AG04449 (cell line): ENCODE measurements at regions of chr19 and their contacts with region 1.

Region 1: GRCh38 chr19:4791170-4792018 is at the start of gene FEM1A:
- DNase-seq: peak; percentile 100
- H3K4me3 ChIP-seq: peak within 1 kb of the TSS; percentile 76
- CTCF ChIP-seq: peak; percentile 97

Region 2: GRCh38 chr19:4723367-4724187 is 67.8 kb before region 1 on chr19 and contains the start of gene DPP9:
- CTCF ChIA-PET with region 1: interaction called, 315 read pairs
- POLR2A ChIA-PET with region 1: interaction called, 7 read pairs
- DNase-seq: peak; percentile 89
- H3K4me3 ChIP-seq: peak within 1 kb of the TSS; percentile 93
- CTCF ChIP-seq: peak; percentile 21

Region 3: GRCh38 chr19:4738734-4739133 is 52.7 kb before region 1 on chr19:
- CTCF ChIA-PET with region 1: interaction called, 315 read pairs
- POLR2A ChIA-PET with region 1: interaction called, 5 read pairs
- DNase-seq: no peak
- H3K4me3 ChIP-seq: no peak overlapping the region
- CTCF ChIP-seq: no peak

Region 4: DNA sequence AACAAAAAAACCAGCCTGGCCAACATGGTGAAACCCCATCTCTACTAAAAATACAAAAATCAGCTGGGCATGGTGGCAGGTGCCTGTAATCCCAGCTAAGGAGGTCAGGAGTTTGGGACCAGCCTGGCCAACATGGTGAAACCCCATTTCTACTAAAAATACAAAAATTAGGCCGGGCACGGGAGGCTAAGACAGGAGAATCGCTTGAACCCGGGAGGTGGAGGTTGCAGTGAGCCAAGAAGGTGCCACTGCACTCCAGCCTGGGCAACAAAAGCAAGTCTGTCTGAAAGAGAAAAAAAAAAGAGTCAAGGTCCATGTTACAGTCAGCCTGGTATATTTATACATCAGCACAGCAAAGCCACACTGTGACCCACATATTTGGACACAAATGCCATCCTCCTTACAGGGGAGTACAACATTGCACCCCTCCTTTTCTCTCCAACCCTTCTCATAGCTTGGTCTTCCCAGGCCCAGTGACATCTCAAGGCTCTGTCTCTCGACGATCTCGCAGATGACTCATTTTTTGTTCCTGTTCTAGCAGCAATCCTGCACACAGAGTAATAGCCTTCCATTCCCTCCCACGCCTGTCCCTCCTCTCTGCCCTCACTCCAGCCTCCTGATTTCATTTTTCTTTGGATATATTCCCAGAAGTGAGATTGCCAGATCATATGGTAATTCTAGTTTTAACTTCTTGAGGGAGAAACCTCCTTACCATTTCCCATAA is 46.8 kb before region 1 on chr19:
- CTCF ChIA-PET with region 1: interaction called, 24 read pairs
- POLR2A ChIA-PET with region 1: interaction called, 4 read pairs
- DNase-seq: peak; percentile 75
- H3K4me3 ChIP-seq: no peak overlapping the region
- CTCF ChIP-seq: no peak

Region 5: GRCh38 chr19:4759388-4760284 is 31.8 kb before region 1 on chr19:
- CTCF ChIA-PET with region 1: interaction called, 23 read pairs
- POLR2A ChIA-PET with region 1: interaction called, 4 read pairs
- DNase-seq: peak; percentile 21
- H3K4me3 ChIP-seq: peak overlapping the region; percentile 37
- CTCF ChIP-seq: no peak

Region 6: DNA sequence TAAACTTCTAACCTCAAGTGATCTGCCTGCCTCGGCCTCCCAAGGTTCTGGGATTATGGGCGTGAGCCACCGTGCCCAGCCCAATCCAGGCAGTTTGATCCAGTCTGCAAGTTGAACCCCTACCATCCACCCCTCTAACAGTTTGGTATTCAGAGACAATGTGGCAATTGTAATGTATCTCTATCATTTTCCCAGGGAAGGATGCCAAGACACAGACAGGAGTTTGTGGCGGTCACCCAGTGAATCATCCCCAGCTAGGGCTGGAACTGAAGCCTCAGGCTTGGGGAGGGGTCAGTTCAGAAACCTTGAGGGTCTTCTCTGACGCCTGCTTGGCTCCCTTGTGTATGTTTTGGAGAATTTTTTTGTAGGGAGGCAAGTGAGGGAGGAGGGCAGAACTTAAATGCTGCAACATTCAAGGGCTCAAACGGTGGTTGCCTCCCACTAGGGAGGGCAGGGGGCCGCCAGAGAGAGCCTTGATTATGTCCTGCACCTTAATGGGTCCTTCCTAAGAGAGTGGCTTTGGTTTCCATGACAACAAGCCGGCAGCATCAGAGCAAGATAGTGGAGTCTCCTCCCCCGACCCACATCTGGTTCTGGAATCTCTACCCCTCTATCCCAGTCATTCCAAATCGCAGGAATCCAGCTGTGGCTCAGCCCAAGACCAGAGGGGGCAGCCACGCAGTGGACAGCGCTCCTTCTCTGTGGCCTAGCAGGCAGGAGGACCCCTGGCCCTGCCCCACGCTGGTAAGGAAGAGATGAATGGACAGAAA is 14.8 kb before region 1 on chr19:
- CTCF ChIA-PET with region 1: interaction called, 10 read pairs
- POLR2A ChIA-PET with region 1: no interaction called
- DNase-seq: no peak
- H3K4me3 ChIP-seq: no peak overlapping the region
- CTCF ChIP-seq: no peak

Region 7: DNA sequence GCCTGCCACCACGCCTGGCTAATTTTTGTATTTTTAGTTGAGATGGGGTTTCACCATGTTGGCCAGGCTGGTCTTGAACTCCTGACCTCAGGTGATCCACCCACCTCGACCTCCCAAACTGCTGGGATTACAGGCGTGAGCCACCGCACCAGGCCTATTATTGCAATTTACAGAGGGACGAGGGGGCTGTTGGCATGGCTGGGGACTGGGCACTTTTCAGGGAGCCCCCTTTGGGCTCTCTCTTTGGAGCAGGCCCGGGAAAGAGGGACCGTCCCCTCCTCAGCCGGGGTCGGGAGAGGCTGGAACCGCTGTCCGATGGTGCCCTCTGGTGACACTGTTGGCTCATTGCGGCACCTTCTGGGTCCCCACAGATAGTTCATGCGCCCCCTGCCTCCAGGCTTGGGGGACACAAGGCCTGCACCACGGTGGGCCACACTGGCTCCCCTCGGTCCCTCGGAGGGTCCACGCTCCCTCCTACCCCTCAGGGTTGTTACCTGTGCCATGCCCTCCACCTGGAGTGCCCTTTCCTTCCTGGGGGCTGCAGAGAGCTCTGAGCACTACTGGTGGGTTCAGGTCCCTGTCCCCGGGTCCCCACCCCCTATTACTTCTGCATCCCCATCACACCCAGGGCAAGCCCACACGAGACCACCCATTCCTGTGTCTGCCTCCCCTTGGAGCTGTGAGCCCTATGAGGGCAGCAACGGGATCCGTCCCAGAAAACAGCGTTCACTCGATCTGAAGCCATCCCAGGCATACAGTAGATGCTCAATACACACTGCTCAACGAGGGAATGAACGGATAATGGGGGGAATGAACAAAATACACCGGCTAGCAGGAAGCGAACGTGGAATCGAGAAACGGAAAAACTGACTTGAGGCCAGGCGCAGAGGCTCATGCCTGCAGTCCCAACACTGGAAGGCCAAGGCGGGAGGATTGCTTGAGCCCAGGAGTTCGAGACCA is 12.6 kb after region 1 on chr19:
- CTCF ChIA-PET with region 1: interaction called, 45 read pairs
- POLR2A ChIA-PET with region 1: no interaction called
- DNase-seq: no peak
- H3K4me3 ChIP-seq: no peak overlapping the region
- CTCF ChIP-seq: peak; percentile 87

Region 8: DNA sequence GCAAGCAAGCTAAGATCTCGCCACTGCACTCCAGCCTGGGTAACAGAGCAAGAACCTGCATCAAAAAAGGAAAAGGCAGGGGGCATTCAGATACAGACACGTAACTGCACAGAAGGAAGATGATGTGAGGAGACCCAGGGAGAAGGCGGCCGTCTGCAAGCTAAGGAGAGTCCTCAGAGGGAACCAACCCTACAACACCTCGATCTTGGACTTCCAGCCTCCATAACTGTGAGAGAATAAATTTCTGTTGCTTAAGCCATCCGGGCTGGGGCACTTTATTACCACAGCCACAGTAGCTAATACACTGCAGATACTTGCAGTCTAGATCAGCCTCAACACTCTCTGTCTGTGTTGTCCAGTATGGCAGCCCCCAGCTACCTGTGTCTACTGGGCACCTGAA is 32.2 kb after region 1 on chr19:
- CTCF ChIA-PET with region 1: no interaction called
- POLR2A ChIA-PET with region 1: no interaction called
- DNase-seq: no peak
- H3K4me3 ChIP-seq: no peak overlapping the region
- CTCF ChIP-seq: no peak